T-cell (primary cell): ENCODE measurements at regions of chr6 and their contacts with region 1.

Region 1: GRCh38 chr6:24933868-24934401 is 1.8 kb downstream of the RIPOR2 start:
- DNase-seq: peak in 17 of 35 experiments; percentile 26 to 82 (median 49)
- ATAC-seq: peak in 3 of 4 experiments; percentile 8 to 23 (median 12)
- H3K4me3 ChIP-seq: peak overlapping the region; percentile 93 to 94
- H3K4me3 Mint-ChIP-seq: peak overlapping the region; percentile 93 to 98 (median 96)
- H3K27ac ChIP-seq: peak overlapping the region; percentile 65
- H3K27ac Mint-ChIP-seq: peak overlapping the region; percentile 97 to 100
- H3K4me1 ChIP-seq: peaks cover 39 to 55% of the 10 kb centered on the region in 2 experiments
- H3K4me1 Mint-ChIP-seq: peaks cover 55 to 73% (median 62%) of the 10 kb centered on the region in 3 donors
- H3K27me3 ChIP-seq: no peaks in the 10 kb centered on the region
- H3K27me3 Mint-ChIP-seq: no peaks in the 10 kb centered on the region

Region 2: DNA sequence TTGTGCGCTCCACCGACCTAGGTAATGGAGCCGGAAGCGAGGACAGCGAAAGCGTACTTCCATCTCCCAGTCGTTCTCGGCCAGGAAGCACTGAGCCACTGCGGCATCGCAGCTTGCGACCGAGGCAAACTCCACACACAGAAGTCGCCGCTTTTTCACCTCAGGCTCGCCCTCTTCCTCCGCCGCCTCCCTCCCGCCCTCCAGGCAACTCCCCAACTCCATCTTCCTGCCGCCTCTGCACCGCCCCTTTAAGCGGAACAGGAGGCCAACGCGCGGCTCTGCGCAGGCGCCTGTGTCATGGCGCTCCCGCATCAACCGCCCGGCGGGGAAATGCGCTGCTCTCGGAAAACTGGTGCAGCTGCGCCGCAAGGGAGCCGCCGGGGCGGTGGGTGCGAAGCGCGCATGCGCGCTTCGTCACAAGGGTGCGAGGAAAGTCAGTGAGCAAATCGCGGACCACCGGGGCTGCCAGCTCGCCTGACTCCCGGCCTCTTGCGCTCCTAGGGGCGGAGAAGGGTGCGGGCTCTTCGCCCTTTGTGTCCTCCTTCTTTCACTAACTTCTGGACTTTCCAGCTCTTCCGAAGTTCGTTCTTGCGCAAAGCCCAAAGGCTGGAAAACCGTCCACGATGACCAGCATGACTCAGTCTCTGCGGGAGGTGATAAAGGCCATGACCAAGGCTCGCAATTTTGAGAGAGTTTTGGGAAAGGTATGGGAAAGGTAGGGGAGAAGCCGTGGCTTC is 267.1 kb before region 1 on chr6 and contains the starts of genes ACOT13 and TDP2:
- CTCF ChIA-PET with region 1: no interaction called
- POLR2A ChIA-PET with region 1: no interaction called
- DNase-seq: peak; percentile 91 to 98 (median 95)
- ATAC-seq: peak; percentile 93 to 96 (median 94)
- H3K4me3 ChIP-seq: peak within 1 kb of the TSS; percentile 78 to 89
- H3K4me3 Mint-ChIP-seq: peak within 1 kb of the TSS; percentile 99 to 100 (median 100)
- H3K27ac ChIP-seq: peak within 1 kb of the TSS; percentile 79
- H3K27ac Mint-ChIP-seq: peak within 1 kb of the TSS; percentile 97
- H3K4me1 ChIP-seq: peaks cover 20 to 24% of the 10 kb centered on the region in 2 experiments
- H3K4me1 Mint-ChIP-seq: peaks cover 68 to 70% (median 68%) of the 10 kb centered on the region in 3 donors
- H3K27me3 ChIP-seq: no peaks in the 10 kb centered on the region
- H3K27me3 Mint-ChIP-seq: no peaks in the 10 kb centered on the region
- total RNA-seq, gene ACOT13: 4.2 to 10.9 (median 9.5) TPM
- total RNA-seq, gene TDP2: 45.7 to 56.5 (median 50.8) TPM

Region 3: DNA sequence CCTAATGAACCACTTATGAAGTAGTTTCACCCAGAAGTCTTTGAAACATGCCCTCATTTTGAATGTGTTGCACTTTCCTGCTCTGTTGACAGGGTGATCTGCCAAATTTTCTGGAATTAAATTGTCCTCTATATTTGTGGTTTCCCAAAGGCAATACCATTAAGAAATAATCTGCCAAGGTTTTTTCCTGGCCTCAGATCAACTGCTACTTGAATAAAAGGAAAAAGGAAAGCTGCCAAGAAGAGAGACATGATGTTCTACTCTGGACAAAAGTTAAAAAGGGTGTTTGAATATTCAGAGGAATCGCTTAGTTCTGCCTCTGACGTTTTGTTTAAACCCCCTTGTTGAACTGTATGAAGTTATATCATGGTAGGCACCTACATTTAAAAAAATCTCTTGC is 97.8 kb before region 1 on chr6:
- CTCF ChIA-PET with region 1: no interaction called
- POLR2A ChIA-PET with region 1: no interaction called
- DNase-seq: no peak
- ATAC-seq: no peak
- H3K4me3 ChIP-seq: no peak overlapping the region
- H3K4me3 Mint-ChIP-seq: no peak overlapping the region
- H3K27ac ChIP-seq: no peak overlapping the region
- H3K27ac Mint-ChIP-seq: peak overlapping the region; percentile 32 to 74
- H3K4me1 ChIP-seq: peaks cover 14 to 18% of the 10 kb centered on the region in 2 experiments
- H3K4me1 Mint-ChIP-seq: peaks cover 66 to 70% (median 67%) of the 10 kb centered on the region in 3 donors
- H3K27me3 ChIP-seq: no peaks in the 10 kb centered on the region
- H3K27me3 Mint-ChIP-seq: no peaks in the 10 kb centered on the region

Region 4: DNA sequence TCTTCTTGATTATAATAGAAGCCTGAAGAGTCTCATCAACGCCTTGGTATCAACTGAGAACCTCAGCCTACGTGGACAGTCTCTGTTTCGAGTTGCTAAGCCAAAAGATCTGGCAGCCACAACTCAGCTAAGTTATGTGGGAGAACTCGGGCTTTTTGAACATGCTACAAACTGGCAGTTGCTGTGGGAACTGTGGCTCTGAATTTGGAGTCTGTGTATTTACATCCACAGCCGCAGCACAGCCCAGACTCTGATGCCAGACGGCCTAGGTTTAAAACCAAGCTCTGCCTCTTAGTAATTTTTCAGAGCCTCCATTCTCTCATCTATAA is 34.0 kb before region 1 on chr6:
- CTCF ChIA-PET with region 1: interaction called in 1 of 2 experiments, 17 read pairs
- POLR2A ChIA-PET with region 1: interaction called, 3 to 4 read pairs
- DNase-seq: peak in 29 of 35 experiments; percentile 9 to 63 (median 37)
- ATAC-seq: peak; percentile 26 to 79 (median 35)
- H3K4me3 ChIP-seq: peak overlapping the region in 1 of 2 donors; percentile 34
- H3K4me3 Mint-ChIP-seq: peak overlapping the region; percentile 43 to 54 (median 54)
- H3K27ac ChIP-seq: peak overlapping the region; percentile 60
- H3K27ac Mint-ChIP-seq: peak overlapping the region; percentile 91 to 92
- H3K4me1 ChIP-seq: peaks cover 41 to 73% of the 10 kb centered on the region in 2 experiments
- H3K4me1 Mint-ChIP-seq: peaks cover 88 to 95% (median 94%) of the 10 kb centered on the region in 3 donors
- H3K27me3 ChIP-seq: no peaks in the 10 kb centered on the region
- H3K27me3 Mint-ChIP-seq: no peaks in the 10 kb centered on the region

Region 5: DNA sequence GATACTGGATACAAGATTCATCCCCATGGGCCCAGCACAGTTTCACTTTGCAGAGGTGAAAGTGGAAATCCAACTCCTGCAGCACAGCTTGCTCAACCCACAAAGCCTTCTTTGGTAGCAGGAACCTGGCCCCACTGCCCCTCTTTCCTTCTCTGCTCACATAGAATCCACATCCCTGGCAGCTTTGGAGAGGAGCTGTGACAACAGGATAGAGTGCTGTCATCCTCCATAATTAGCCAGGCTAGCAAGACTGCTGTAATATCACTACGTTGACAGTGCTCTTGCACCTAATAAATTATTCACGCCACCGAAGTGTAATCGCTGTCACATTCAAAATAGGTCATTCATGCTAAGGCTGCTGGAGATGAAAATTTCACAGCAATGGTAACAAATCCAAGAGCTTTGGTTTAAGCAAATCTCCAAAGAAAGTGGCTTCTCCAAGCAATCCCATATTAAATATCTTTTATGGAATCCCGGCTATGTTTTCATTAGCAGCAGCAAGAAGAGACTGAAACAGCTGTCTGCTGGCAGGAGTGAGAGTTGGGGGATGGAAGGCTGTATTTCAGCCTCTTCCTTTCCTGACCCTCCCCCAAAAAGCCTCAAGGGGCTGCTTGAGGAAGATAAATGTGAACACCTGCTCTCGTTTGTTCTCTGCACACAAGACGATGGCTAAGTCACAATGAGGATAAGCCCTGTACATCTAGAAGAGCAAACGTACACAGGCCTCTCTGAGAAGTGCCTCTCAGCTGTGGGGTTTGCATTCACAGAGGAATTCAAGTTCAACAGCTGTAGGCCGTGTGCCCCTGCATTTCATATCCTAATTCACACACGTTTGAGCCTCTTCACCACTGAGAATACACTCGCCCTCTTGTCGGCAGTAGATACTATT is 14.7 kb before region 1 on chr6:
- CTCF ChIA-PET with region 1: interaction called, 16 to 88 read pairs
- POLR2A ChIA-PET with region 1: interaction called, 5 to 6 read pairs
- DNase-seq: peak in 1 of 35 experiments; percentile 5
- ATAC-seq: peak; percentile 29 to 59 (median 34)
- H3K4me3 ChIP-seq: peak overlapping the region; percentile 19 to 20
- H3K4me3 Mint-ChIP-seq: peak overlapping the region; percentile 75 to 93 (median 75)
- H3K27ac ChIP-seq: peak overlapping the region; percentile 55
- H3K27ac Mint-ChIP-seq: peak overlapping the region; percentile 84 to 90
- H3K4me1 ChIP-seq: peaks cover 69 to 85% of the 10 kb centered on the region in 2 experiments
- H3K4me1 Mint-ChIP-seq: peaks cover 95 to 96% (median 96%) of the 10 kb centered on the region in 3 donors
- H3K27me3 ChIP-seq: no peaks in the 10 kb centered on the region
- H3K27me3 Mint-ChIP-seq: no peaks in the 10 kb centered on the region

Region 6: DNA sequence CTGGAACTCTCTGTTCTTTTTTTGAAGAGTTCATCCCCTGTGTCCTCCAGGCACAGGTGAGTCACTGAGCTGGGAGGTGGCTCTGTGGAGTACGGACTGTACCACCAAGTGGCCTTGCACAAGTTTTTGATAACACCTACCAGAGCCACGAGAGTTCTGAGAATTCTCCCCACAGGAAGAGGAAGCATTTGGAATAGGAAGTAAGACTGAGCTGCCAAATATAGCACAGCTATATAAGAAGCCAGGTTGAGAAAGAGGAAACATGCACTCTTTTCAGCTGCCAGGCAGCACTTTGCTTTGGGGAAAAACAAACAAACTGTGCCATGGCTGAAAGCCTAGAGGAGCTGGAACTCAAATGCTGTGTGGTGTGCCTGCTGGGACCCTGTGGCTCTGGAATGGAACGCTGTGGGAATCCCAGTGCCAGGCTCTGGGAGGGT is 72.6 kb after region 1 on chr6:
- CTCF ChIA-PET with region 1: interaction called, 3 to 10 read pairs
- POLR2A ChIA-PET with region 1: interaction called, 3 to 5 read pairs
- DNase-seq: peak in 16 of 35 experiments; percentile 7 to 54 (median 20)
- ATAC-seq: peak; percentile 72 to 80 (median 75)
- H3K4me3 ChIP-seq: peak overlapping the region in 1 of 2 donors; percentile 20
- H3K4me3 Mint-ChIP-seq: peak overlapping the region in 2 of 3 donors; percentile 38 to 68
- H3K27ac ChIP-seq: peak overlapping the region; percentile 84
- H3K27ac Mint-ChIP-seq: peak overlapping the region; percentile 88 to 91
- H3K4me1 ChIP-seq: peaks cover 49 to 61% of the 10 kb centered on the region in 2 experiments
- H3K4me1 Mint-ChIP-seq: peaks cover 79 to 99% (median 80%) of the 10 kb centered on the region in 3 donors
- H3K27me3 ChIP-seq: no peaks in the 10 kb centered on the region
- H3K27me3 Mint-ChIP-seq: no peaks in the 10 kb centered on the region

Region 7: DNA sequence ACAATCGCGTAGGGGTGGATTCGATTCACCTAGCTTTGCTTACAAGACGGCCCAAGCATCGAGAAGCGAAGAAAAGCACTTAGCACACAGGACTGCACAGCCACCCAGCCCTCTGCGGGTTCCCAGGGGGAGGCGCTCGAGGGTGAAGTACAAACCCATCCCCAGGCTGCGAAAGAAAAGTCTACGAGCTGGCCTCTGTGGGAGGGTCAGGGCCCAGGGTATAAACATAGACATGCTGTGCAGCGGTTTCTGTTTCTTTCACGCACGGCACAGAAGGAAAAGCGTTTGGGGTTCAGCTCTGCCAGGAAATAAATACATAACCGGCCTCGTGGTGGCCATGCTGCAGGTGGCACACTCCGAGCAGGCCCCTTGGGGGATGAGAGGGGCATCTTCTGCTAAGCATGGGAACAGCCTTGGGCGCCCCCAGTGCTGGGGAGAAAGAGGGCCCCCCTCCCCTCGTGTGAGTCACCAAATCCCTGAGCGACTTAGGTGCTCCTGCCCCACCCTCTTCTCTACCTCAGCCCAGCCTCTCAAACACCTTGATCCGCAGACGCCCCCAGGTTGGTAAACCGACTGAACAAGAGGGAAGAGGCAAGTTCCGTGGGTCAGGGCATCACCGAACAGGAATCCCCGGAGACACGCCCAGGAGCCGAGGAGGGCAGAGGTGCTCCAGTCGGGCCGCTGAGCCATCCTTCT is 93.4 kb after region 1 on chr6:
- CTCF ChIA-PET with region 1: interaction called, 3 to 12 read pairs
- POLR2A ChIA-PET with region 1: interaction called in 1 of 2 experiments, 4 read pairs
- DNase-seq: peak; percentile 58 to 87 (median 76)
- ATAC-seq: peak; percentile 95 to 98 (median 96)
- H3K4me3 ChIP-seq: peak overlapping the region; percentile 35 to 58
- H3K4me3 Mint-ChIP-seq: peak overlapping the region; percentile 72 to 80 (median 75)
- H3K27ac ChIP-seq: peak overlapping the region; percentile 85
- H3K27ac Mint-ChIP-seq: peak overlapping the region; percentile 86 to 91
- H3K4me1 ChIP-seq: peaks cover 21 to 30% of the 10 kb centered on the region in 2 experiments
- H3K4me1 Mint-ChIP-seq: peaks cover 46 to 60% (median 55%) of the 10 kb centered on the region in 3 donors
- H3K27me3 ChIP-seq: no peaks in the 10 kb centered on the region
- H3K27me3 Mint-ChIP-seq: no peaks in the 10 kb centered on the region

Region 8: GRCh38 chr6:26431258-26432172 is 1497.6 kb after region 1 on chr6:
- CTCF ChIA-PET with region 1: no interaction called
- POLR2A ChIA-PET with region 1: no interaction called
- DNase-seq: no peak
- ATAC-seq: no peak
- H3K4me3 ChIP-seq: no peak overlapping the region
- H3K4me3 Mint-ChIP-seq: no peak overlapping the region
- H3K27ac ChIP-seq: no peak overlapping the region
- H3K27ac Mint-ChIP-seq: no peak overlapping the region
- H3K4me1 ChIP-seq: no peaks in the 10 kb centered on the region
- H3K4me1 Mint-ChIP-seq: no peaks in the 10 kb centered on the region
- H3K27me3 ChIP-seq: no peaks in the 10 kb centered on the region
- H3K27me3 Mint-ChIP-seq: no peaks in the 10 kb centered on the region